ENCODE measurements at regions of chr7 and their contacts with region 1.

Region 1: DNA sequence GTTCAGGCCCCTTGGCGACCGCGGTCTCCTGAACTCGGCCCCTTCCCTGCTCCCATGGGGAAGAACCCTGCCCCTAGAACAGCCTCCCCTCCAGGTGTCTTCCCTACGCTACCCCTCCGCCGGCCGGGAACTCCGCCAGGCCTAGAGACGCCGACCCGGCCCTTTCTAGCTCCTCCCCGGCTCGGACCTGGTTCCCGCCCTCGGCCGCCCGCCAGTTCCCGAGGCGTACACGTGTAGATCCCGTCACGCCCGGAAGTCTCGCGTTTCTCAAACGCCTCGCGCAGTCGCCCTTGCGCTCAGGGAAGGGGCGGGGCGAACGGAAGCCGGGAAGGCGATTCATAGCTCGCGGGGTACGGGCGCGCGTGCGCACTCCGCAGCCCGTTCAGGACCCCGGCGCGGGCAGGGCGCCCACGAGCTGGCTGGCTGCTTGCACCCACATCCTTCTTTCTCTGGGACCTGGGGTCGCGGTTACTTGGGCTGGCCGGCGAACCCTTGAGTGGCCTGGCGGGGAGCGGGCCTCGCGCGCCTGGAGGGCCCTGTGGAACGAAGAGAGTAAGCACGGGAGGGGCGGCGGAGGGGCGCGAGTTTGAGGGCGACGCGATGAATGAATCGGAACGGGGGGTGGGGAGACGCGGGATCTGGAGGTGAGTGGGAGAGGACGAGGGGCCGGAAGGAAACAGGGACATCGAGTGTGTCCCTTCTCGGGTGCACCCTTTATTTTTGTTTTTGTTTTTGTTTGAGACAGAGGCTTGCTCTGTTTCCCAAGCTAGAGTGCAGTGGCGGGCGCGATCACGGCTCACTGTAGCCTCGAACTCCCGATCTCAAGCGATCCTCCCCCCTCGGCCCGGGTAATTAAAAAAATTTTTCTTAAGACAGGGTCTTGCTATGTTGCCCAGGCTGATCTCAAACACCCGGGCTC is at the start of gene POP7:
- DNase-seq: peak; percentile 98
- H3K4me3 ChIP-seq: peak within 1 kb of the TSS; percentile 54 to 85 (median 65)
- H3K27ac ChIP-seq: peak within 1 kb of the TSS; percentile 49
- H3K4me1 ChIP-seq: peaks cover 12% of the 10 kb centered on the region
- H3K27me3 ChIP-seq: peaks cover 1 to 2% of the 10 kb centered on the region in 2 experiments
- CTCF ChIP-seq: no peak
- POLR2A ChIP-seq: peak; percentile 69
- total RNA-seq, gene POP7: 47.4 and 48.0 TPM in 2 replicates

Region 2: GRCh38 chr7:100586266-100587025 is 119.6 kb before region 1 on chr7 and contains the start of gene FBXO24:
- CTCF ChIA-PET with region 1: interaction called, 4 read pairs
- POLR2A ChIA-PET with region 1: interaction called, 13 read pairs
- dilution Hi-C with region 1: no loop called
- intact Hi-C with region 1: no loop called
- DNase-seq: peak; percentile 100
- H3K4me3 ChIP-seq: peak within 1 kb of the TSS; percentile 86 to 95 (median 93)
- H3K27ac ChIP-seq: peak within 1 kb of the TSS; percentile 65
- H3K4me1 ChIP-seq: peaks cover 32% of the 10 kb centered on the region
- H3K27me3 ChIP-seq: peaks cover 0 to 4% of the 10 kb centered on the region in 2 experiments
- CTCF ChIP-seq: no peak
- POLR2A ChIP-seq: peak; percentile 72
- total RNA-seq, gene FBXO24: 0.35 and 0.38 TPM in 2 replicates

Region 3: DNA sequence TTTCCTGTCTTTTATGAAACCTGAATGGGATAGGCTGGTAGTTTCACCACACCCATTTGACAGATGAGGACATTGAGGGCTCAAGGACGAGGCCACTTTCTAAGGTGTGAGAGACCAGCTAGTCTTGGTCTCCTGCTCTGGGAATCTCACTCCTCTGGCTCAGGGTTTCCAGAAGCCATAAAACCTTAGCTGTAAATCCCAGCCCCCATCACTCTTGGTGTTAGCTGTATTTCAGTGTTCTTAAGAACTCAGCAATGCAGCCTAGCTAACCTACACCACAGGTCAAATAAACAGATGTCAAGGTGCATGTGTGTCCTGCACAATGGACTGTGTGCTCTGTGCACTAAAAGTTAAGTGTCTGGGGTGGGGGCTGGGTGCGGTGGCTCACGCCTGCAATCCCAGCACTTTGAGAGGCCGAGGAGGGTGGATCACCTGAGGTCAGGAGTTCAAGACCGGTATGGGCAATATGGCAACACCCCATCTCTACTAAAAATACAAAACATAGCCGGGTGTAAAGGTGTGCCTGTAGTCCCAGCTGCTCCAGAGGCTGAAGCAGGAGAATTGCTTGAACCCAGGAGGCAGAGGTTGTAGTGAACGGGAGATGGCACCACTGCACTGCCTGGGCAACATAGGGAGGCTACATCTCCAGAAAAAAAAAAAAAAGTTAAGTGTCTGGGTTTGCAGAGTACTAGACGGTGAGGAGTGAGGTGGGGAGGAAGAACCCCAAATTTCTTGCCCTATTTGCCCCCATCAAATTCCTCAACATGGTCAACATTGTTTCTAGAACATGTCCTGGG is 13.7 kb after region 1 on chr7:
- CTCF ChIA-PET with region 1: interaction called, 90 read pairs
- POLR2A ChIA-PET with region 1: no interaction called
- dilution Hi-C with region 1: no loop called
- intact Hi-C with region 1: loop called (anchors 2 kb)
- DNase-seq: no peak
- H3K4me3 ChIP-seq: no peak overlapping the region
- H3K27ac ChIP-seq: no peak overlapping the region
- H3K4me1 ChIP-seq: no peaks in the 10 kb centered on the region
- H3K27me3 ChIP-seq: peaks cover 27 to 33% of the 10 kb centered on the region in 2 experiments
- CTCF ChIP-seq: peak in 1 of 2 donors; percentile 11
- POLR2A ChIP-seq: no peak

Region 4: DNA sequence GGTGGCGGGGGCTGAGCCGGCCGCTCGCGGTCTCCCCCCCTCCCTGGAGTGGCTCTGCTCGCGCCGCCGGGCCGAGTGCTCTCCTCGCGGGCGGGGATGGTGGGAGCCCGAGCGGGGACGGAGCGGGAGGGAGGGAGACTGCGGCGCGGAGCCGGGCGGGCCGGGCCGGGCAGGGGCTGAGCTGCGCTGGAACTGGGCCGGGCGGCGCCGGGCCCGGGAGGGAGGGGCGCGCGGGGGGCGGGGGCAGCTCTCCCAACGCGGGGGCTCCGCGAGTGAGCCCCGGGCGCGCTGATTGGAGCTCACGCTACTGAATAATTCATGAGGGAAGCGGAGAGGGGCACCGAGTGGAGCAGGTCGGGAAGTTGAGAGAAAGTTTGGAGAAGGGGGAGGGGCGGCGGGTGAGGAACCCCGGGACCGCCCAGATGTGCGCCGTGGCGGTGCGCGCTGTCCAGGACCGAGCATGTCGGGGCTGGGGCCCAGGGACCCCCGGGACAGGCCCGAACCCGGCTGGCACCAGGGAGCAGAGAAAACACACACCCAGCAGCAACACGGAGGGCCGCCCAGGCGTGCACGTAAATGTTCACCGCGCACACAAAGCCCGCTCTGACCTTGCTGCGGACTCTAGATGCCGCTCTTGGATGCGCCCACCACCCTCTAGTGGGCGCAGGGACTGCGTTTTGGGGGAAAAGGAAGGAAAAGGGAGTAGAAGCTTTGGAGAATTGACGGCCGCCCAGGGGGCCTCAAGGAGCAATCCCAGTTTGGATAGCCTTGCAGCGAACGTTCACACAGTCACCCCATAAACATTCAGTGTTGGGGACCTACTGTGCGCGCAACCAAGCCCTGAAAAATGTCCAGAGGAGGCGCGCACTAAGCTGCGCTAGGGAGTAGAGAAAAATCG is 121.6 kb after region 1 on chr7 and contains the start of gene EPHB4:
- CTCF ChIA-PET with region 1: interaction called, 23 read pairs
- POLR2A ChIA-PET with region 1: interaction called, 3 read pairs
- dilution Hi-C with region 1: loop called (anchors 25 kb)
- intact Hi-C with region 1: loop called (anchors 2 kb)
- DNase-seq: peak; percentile 88
- H3K4me3 ChIP-seq: peak within 1 kb of the TSS; percentile 88 to 92 (median 90)
- H3K27ac ChIP-seq: peak within 1 kb of the TSS; percentile 94
- H3K4me1 ChIP-seq: peaks cover 23% of the 10 kb centered on the region
- H3K27me3 ChIP-seq: no peaks in the 10 kb centered on the region
- CTCF ChIP-seq: peak; percentile 42 to 62
- POLR2A ChIP-seq: peak; percentile 17
- total RNA-seq, gene EPHB4: 148 and 193 TPM in 2 replicates

Region 5: DNA sequence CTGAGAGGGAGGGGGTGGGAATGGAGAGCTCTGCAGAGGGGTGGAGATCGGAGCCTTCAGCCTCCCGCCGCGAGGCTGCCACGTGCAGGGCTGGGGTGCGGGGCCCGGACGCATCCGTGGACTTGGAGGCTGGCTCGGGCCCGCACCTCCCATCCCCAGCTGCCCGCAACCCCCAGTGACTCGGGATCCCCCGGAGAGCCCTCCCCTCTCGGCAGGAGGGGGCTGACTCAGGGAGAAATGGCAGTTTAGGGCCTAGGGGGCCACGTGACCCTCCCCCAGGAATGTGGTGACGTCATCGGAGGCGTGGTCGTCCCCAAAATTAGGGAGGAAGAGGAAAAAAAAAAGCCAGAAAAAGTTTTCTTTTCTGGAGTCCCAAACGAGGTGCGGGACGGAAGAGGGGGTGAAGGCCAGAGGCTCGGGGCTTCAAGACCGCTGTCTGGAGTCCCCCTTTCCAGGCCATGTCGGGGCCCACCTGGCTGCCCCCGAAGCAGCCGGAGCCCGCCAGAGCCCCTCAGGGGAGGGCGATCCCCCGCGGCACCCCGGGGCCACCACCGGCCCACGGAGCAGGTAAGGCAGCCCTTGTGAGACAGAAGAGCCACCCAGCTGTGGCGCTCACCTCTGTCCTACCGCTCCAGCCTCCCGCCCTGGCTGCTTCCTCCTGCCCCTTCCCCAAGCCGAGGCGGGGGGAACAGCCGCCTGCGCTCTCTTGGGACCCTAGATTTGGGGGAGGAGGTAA is 161.2 kb after region 1 on chr7 and contains the start of gene TRIP6:
- CTCF ChIA-PET with region 1: interaction called, 5 read pairs
- POLR2A ChIA-PET with region 1: no interaction called
- dilution Hi-C with region 1: no loop called
- intact Hi-C with region 1: loop called (anchors 1 kb)
- DNase-seq: peak; percentile 76
- H3K4me3 ChIP-seq: peak within 1 kb of the TSS; percentile 72 to 93 (median 87)
- H3K27ac ChIP-seq: peak within 1 kb of the TSS; percentile 90
- H3K4me1 ChIP-seq: peaks cover 36% of the 10 kb centered on the region
- H3K27me3 ChIP-seq: no peaks in the 10 kb centered on the region
- CTCF ChIP-seq: no peak
- POLR2A ChIP-seq: peak; percentile 82
- total RNA-seq, gene TRIP6: 84.5 and 90.3 TPM in 2 replicates

Region 6: GRCh38 chr7:101058355-101058754 is 352.3 kb after region 1 on chr7:
- CTCF ChIA-PET with region 1: interaction called, 10 read pairs
- POLR2A ChIA-PET with region 1: no interaction called
- dilution Hi-C with region 1: no loop called
- intact Hi-C with region 1: loop called (anchors 1 kb)
- DNase-seq: peak; percentile 53
- H3K4me3 ChIP-seq: no peak overlapping the region
- H3K27ac ChIP-seq: no peak overlapping the region
- H3K4me1 ChIP-seq: no peaks in the 10 kb centered on the region
- H3K27me3 ChIP-seq: peaks cover 3 to 5% of the 10 kb centered on the region in 2 experiments
- CTCF ChIP-seq: no peak
- POLR2A ChIP-seq: no peak